Dorsolateral prefrontal cortex (tissue), 120 donors: ENCODE measurements at regions of chr6 and their contacts with region 1.

Region 1: DNA sequence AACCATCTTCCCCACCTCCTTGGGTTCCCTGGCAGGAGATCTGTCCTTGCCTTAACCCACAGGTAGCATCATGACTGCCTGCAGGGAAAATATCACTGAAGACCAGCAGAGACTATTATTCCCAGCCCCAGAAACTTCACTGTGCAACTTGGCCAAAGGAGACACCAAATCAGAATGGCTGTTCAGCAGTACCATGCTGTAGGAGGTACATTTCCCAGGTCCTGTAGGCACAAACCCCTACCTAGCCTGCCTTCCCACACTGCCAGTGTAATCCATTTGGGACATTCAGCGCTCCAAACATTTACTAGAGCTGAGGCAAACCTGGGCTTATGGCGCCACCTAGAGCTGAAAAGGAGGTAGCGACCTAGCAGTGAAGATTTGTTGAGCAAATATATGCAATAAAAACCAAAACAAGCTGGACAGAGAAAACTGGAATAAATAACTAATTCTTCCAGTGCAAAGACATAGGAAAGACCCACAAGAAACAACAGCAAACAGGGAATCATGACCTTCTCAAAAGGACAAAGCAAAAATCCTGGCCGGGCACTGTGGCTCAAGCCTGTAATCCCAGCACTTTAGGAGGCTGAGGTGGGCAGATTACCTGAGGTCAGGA is 60.3 kb downstream of the VTA1 start:
- DNase-seq: peak in 1 of 10 donors; percentile 40
- H3K4me3 ChIP-seq: no peak overlapping the region
- H3K27ac ChIP-seq: no peak overlapping the region
- H3K27me3 ChIP-seq: no peaks in the 10 kb centered on the region
- CTCF ChIP-seq: peak in 54 of 56 donors; percentile 22 to 71 (median 53)

Region 2: GRCh38 chr6:141963516-141964285 is 243.7 kb before region 1 on chr6:
- intact Hi-C with region 1: no loop called
- DNase-seq: no peak
- H3K4me3 ChIP-seq: no peak overlapping the region
- H3K27ac ChIP-seq: no peak overlapping the region
- H3K27me3 ChIP-seq: peaks cover 0 to 3% (median 0%) of the 10 kb centered on the region in 45 donors
- CTCF ChIP-seq: no peak

Region 3: DNA sequence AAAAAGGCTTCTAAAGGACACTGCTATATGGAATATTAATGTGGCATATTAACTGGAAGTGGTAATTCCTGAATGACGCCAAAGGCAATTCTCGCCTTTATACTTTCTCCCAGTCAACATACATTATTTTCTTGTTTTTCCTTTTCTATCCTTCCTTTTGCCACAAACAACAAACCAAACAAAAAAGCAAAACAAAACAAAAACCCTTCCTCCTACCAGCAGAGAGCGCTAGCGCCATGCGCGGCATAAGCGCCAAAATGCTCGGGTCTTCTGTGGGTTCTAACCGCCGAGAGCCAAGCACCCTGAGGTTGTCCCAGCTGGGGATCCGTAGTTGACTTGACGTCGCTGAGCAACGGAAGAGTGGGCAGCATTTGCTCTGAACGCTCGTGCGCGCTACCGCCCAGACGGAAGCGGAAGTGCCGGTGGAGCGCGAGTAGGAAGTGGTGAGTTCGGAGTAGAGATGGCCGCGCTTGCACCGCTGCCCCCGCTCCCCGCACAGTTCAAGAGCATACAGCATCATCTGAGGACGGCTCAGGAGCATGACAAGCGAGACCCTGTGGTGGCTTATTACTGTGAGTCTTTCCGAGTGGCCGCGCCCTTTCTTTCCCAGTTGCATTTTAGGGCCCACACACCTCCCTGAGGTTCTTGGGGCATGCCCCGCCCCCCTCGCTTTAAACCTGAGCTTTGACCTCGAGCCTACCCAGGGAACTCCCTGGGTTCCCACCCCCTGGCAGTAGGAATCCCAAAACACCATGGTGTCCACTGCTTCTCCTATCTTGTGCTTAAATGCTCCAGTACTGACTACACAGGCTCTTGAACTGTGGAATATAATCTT is 60.3 kb before region 1 on chr6 and contains the starts of genes NMBR and VTA1:
- intact Hi-C with region 1: loop called (anchors 5 to 10 kb)
- DNase-seq: peak; percentile 95 to 98 (median 98)
- H3K4me3 ChIP-seq: peak within 1 kb of the TSS; percentile 63 to 99 (median 91)
- H3K27ac ChIP-seq: peak within 1 kb of the TSS in 56 of 59 donors; percentile 7 to 89 (median 72)
- H3K27me3 ChIP-seq: no peaks in the 10 kb centered on the region
- CTCF ChIP-seq: peak; percentile 93 to 100 (median 98)
- total RNA-seq, gene NMBR: 0.34 to 2.5 (median 0.73) TPM in 85 of 120 experiments, not detected in the others
- total RNA-seq, gene VTA1: 22.1 to 59.4 (median 43.8) TPM

Region 4: DNA sequence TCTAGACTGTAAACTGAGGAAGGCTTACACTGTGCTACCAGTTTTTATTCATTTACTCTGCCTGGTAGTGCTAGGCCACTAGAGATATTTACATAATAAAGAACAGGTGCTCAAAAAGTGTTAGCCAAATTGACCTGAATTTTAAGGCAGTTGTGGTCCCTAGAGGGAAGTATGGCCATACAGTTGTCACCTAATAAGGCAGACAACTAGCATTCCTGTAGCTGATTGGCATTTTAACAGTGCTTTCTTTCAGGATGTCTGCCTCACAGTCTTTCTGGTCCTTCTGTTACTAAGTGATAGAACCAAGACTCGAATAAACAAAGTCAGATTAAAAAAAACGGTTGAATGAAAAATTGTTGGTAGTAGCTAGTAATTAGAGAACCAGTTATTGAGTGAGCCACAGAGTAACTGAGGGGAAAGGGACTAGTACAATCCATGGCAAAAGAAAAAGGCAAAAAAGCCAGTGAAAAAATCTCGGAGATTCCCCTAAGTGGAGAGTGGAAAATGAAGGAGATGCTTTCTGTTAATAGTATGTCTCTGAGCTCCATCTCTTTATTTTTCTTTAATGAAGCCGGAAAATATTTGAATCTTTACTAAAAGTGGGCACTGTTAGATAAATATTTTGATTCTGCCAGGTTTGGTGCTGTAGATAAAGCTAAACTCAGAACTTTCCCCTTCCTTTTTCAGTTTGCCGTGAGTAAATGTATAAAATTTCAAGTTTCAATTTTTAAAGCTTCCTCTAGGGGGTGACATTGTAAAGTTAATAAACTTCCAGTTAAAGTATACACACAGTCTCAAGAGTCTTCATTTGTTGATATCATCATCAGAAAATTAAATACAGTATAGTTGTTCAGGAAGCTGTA is 51.2 kb before region 1 on chr6:
- intact Hi-C with region 1: loop called in 1 of 2 experiments (anchors 10 kb)
- DNase-seq: no peak
- H3K4me3 ChIP-seq: no peak overlapping the region
- H3K27ac ChIP-seq: peak overlapping the region in 1 of 59 donors; percentile 33
- H3K27me3 ChIP-seq: no peaks in the 10 kb centered on the region
- CTCF ChIP-seq: peak; percentile 26 to 77 (median 56)